ENCODE measurements at regions of chr5 and their contacts with region 1.

Region 1: DNA sequence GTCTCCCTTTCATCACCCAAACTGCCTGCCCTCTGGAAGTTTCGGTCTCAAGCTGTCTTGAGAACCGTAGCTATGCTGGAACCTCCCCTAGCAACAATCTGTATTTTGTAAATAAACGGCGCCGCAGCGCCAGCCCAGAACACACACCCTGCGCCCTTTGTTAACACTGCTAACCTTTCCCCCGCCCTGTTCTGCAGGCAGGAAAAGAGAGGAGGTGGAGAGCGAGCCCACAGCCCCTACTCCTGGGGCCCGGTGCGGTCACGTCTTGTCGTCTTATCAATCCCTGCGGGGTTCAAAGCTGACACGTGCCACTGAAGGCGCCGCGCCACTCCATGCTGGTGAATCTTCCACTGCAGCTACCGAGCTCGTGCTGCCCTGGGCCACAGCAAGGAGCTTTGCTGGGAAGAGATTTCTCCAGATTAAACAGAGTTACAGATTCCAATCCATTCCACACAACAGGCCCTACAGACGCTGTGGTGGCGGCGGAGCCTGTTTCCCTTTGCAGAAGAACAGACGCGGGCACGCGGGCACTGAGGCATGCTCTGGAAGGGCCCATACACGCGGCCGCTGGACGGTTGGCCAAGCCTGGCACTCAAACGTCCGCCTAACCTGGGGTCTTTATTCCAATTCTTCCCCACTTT is 25.3 kb downstream of the ZDHHC11B start:
- DNase-seq: peak; percentile 67
- ATAC-seq: peak; percentile 80

Region 2: GRCh38 chr5:849651-850301 is 90.5 kb after region 1 on chr5:
- intact Hi-C with region 1: loop called (anchors 5 kb)
- DNase-seq: peak; percentile 49
- ATAC-seq: peak; percentile 36